Panc1 (cell line): ENCODE measurements at regions of chrX and their contacts with region 1.

Region 1: DNA sequence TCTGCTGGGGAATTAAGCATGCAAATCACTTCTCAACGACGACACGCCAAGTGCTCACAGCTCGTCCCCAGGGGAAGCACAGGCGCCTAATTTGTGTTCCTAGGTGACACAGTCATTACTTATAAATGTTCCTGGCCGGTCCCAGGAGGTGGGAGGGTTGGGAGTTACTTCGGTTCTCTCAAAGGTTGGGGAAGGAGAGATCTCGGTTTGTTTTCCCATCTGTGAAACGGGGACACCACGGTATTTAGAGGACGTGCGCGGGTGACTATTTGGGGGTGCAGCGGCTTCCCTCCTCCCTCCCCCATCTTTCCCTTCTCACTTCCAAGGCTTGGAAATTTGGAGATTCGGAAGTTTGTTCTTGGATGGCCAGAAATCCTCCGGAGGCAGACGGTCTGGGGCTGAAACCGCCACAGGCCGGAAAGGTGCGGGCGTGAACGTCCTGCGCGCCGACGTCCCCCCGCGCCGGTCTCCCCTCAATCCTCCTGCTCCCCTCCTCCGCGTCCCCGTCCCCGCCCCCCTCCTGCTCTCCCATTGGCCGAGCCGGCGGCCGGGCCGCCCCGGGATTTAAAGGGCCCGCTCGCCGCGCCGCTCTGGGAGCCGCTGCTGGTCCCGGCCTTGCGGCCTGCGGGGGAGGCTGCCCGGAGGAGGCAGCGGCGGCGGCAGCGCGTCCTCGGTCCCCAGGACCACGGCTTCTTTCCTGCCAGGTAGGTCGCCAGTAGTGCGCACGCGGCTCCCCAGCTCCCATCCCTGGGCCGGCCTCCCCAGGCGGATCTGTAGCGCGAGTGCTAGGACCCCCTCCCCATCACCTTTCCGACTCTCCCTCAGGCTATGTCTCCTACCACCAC is at the start of gene PORCN:
- DNase-seq: no peak
- ATAC-seq: peak; percentile 97
- H3K4me3 ChIP-seq: peak within 1 kb of the TSS; percentile 73 to 84
- H3K27ac ChIP-seq: peak within 1 kb of the TSS; percentile 88
- H3K4me1 ChIP-seq: no peaks in the 10 kb centered on the region
- H3K27me3 ChIP-seq: no peaks in the 10 kb centered on the region
- CTCF ChIP-seq: no peak
- total RNA-seq, gene PORCN: 8.6 TPM

Region 2: DNA sequence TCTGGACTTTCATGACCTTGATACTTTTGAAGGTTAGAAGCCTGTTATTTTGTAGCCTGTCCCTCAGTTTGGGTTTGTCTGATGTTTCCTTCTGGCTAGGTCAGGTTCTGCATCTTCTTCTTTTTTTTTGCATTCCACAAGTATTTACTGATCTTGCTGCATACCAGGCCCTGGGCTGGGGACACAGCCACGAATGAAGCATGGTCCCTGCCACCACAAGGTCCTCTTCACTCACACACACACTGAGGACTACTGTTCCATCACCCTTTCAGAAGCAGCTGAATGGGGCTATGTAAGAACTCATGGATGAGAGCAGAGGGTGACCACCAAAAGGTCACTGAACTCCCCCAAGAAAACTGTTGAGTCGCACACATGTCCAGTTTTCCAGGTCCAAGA is 1236.6 kb before region 1 on chrX:
- CTCF ChIA-PET with region 1: no interaction called
- POLR2A ChIA-PET with region 1: interaction called, 10 read pairs
- in situ Hi-C with region 1: no loop called
- intact Hi-C with region 1: no loop called
- DNase-seq: no peak
- ATAC-seq: no peak
- H3K4me3 ChIP-seq: no peak overlapping the region
- H3K27ac ChIP-seq: no peak overlapping the region
- H3K4me1 ChIP-seq: no peaks in the 10 kb centered on the region
- H3K27me3 ChIP-seq: no peaks in the 10 kb centered on the region
- CTCF ChIP-seq: no peak

Region 3: GRCh38 chrX:48083212-48083611 is 425.4 kb before region 1 on chrX:
- CTCF ChIA-PET with region 1: no interaction called
- POLR2A ChIA-PET with region 1: interaction called, 4 read pairs
- in situ Hi-C with region 1: no loop called
- intact Hi-C with region 1: loop called (anchors 10 kb)
- DNase-seq: no peak
- ATAC-seq: peak; percentile 95
- H3K4me3 ChIP-seq: no peak overlapping the region
- H3K27ac ChIP-seq: no peak overlapping the region
- H3K4me1 ChIP-seq: no peaks in the 10 kb centered on the region
- H3K27me3 ChIP-seq: no peaks in the 10 kb centered on the region
- CTCF ChIP-seq: peak; percentile 79

Region 4: DNA sequence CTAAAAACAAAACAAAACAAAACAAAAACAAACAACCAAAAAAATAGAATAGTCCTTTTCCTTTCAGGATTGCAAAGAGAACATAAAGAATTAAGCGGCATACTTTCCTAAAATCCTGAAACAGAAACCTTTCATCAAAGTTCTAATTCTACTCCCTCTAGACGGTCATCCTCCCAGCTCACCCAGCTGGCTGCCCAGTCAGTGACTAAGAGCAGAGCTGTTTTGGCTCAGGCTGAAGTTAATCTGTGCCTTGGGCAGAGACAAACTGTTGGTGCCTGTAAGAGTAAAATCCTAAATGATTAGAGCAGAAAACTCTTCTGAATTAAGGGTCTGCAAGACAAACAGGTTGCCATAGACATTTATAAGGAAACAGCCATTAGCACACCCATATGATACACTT is 157.4 kb after region 1 on chrX:
- CTCF ChIA-PET with region 1: no interaction called
- POLR2A ChIA-PET with region 1: no interaction called
- in situ Hi-C with region 1: no loop called
- intact Hi-C with region 1: no loop called
- DNase-seq: no peak
- ATAC-seq: 0 out of 2 replicates have a peak, but pooled peaks have one; percentile 63
- H3K4me3 ChIP-seq: no peak overlapping the region
- H3K27ac ChIP-seq: no peak overlapping the region
- H3K4me1 ChIP-seq: no peaks in the 10 kb centered on the region
- H3K27me3 ChIP-seq: no peaks in the 10 kb centered on the region
- CTCF ChIP-seq: no peak

Region 5: DNA sequence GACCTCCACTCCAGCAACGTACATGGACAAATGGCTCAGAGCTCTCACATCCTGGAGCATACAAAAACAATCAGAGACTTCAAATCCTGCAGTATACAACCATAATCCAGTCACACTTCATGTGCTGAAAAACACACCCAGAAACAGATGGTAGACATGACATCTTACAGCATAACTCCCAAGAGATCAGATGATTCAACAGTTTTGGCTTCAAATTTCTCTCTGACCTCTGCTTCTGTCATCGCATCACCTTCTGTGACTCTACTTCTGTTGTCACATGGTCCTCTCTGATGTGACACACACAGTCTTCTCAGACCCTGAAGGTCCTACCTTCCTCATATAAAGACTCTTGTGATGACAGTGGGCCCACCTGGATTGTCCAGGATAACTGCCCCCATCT is 206.4 kb after region 1 on chrX:
- CTCF ChIA-PET with region 1: no interaction called
- POLR2A ChIA-PET with region 1: no interaction called
- in situ Hi-C with region 1: no loop called
- intact Hi-C with region 1: no loop called
- DNase-seq: no peak
- ATAC-seq: no peak
- H3K4me3 ChIP-seq: no peak overlapping the region
- H3K27ac ChIP-seq: no peak overlapping the region
- H3K4me1 ChIP-seq: no peaks in the 10 kb centered on the region
- H3K27me3 ChIP-seq: no peaks in the 10 kb centered on the region
- CTCF ChIP-seq: no peak